HAP-1 (cell line): ENCODE measurements at regions of chr11 and their contacts with region 1.

Region 1: GRCh38 chr11:69909561-69910496 is 90.6 kb upstream of the FGF3 start:
- DNase-seq: peak in 1 of 2 experiments; percentile 54
- H3K4me3 ChIP-seq: no peak overlapping the region
- H3K4me1 ChIP-seq: no peaks in the 10 kb centered on the region
- H3K27me3 ChIP-seq: peaks cover 10% of the 10 kb centered on the region; the same call in 1 of the 2 replicates

Region 2: DNA sequence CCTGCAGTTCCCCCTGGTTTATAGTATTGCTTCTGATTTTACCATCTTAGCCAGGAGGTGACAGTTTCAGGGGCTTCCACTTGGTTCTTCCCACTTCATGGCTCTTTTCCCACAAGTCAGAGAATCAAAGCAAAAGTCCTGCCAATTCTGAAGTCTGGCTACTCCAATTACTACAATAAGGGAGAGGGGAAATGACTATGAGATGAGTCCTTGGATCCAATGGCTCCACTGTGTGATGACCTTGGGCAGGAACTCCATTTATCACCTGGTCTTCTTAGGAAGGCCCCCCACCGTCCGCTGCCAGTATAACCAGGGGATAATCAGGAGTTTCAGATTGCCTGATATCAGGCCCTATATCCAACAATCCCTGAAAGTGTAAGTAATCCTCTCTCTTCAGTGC is 300.5 kb before region 1 on chr11:
- in situ Hi-C with region 1: no loop called
- DNase-seq: no peak
- H3K4me3 ChIP-seq: no peak overlapping the region
- H3K4me1 ChIP-seq: no peaks in the 10 kb centered on the region
- H3K27me3 ChIP-seq: peaks cover 14% of the 10 kb centered on the region; the same call in 1 of the 2 replicates

Region 3: GRCh38 chr11:69972351-69972802 is 62.5 kb after region 1 on chr11:
- in situ Hi-C with region 1: no loop called
- DNase-seq: no peak
- H3K4me3 ChIP-seq: no peak overlapping the region
- H3K4me1 ChIP-seq: no peaks in the 10 kb centered on the region
- H3K27me3 ChIP-seq: no peaks in the 10 kb centered on the region

Region 4: DNA sequence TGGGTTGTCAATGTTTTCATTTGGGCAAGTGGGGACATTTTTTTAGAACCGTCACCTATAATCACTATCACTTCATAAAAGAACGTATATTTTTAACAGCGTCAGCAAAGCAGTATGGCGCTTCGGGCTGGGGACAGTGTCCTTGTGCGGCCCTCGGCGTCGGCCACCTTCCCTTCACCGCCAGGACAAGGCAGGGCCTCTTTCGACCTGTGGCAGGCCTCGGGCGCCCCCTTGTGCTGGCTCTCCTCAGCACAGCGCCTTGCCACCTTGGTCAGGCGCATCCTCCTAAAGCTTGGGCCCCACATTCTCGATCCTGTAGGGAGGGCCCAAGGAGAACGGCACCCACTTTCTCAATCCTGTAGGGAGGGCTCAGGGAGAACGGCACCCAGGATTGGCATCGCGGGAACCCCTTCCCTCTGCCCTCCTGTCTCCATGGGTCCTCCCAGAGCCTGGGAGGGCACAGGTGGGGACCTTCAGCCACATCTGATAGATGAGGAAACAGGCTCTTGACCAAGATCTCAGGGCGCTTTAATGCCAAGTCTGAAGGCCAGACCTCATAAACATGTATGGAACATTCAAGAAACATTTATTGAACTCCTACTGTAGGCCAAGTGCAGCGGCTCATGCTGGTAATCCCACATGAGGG is 281.8 kb after region 1 on chr11:
- in situ Hi-C with region 1: loop called (anchors 5 kb)
- DNase-seq: peak; percentile 48 to 91
- H3K4me3 ChIP-seq: no peak overlapping the region
- H3K4me1 ChIP-seq: no peaks in the 10 kb centered on the region
- H3K27me3 ChIP-seq: no peaks in the 10 kb centered on the region; the same call in 1 of the 2 replicates